ENCODE measurements at regions of chr12 and their contacts with region 1.

Region 1: GRCh38 chr12:56987551-56988053 is 18.7 kb downstream of the ZBTB39 start:
- DNase-seq: peak; percentile 78

Region 2: DNA sequence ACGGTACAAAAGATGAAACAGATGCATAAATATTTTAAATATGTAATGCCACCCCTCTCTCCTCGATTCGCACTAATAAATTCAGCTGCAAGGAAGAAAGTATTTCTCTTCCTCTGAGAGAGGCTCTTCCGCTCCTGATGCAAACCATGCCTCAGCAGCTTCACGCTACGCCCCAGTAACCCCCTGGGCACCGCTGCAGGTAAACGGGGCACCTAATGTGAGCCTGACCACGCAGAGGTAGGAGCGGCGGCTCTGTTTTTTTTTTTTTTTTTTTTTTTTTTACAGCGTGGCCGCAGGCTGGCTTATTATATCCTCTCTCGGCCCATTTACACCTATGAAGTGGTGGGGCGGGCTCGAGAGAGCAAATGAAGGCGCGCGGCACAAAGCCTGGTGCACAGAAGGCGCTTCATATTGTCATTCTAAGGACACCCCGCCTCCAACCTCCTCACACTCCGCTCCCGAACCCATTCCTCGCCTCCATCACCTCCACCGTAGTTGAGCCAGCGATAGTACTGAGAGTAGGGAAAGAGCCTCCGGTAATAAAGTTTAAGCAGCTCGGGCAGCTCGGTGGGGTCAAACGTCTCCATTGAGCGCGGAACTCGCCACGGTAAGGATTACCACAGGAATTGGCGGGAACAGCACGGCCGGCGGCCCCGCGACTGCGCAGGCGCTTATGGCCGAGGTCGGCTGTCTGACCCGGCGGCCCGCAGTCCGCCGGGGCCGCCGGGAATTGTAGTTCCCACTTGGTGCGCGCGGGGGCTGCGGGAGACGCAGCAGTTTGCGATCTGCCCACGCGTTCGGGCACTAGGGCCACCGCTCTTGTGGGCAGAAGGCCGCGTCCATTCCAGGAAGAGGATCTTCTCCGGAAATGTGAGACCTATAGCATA is 235.6 kb before region 1 on chr12 and contains the start of gene PRIM1:
- in situ Hi-C with region 1: loop called (anchors 25 kb)
- DNase-seq: peak; percentile 84
- total RNA-seq, gene PRIM1: 33.6 and 36.5 TPM in 2 replicates